H1 (cell line): ENCODE measurements at regions of chr5 and their contacts with region 1.

Region 1: DNA sequence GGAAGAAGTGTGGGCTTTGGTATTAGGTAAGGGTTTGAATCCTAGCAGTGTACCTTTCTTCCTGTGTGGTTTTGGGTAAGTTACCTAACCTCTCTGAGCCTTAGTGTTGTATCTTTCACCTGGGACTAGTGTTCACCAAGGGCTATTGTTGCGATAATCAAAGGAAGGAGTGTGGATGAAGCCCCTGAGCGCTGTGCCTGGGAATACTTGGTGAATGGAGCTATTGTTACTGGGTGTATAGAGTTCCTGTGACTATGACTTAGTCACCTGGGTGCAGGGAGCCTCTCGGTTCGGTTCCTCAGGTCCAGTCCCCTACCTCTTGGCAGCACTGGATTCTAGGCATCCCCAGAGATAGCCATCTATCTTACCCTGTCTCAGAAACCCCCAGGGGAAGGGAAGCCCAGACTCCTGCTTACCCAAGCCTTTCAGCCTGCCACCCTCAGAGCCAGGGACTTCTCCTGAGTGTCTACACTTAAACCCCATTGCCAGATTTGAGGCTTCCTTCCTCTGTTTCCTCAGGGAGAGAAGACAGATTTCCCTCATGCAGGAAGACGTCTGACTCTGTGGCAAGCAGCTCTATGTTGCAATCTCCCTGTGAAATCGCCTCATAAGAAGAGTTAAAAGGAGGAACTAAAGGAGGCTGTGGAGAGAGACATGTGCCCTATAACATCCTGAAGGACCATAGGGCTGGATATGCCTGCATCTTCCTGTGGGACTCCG is 181.0 kb upstream of the PITX1 start:
- DNase-seq: peak in 1 of 2 experiments; percentile 13
- H3K4me3 ChIP-seq: no peak overlapping the region
- H3K27ac ChIP-seq: no peak overlapping the region
- H3K4me1 ChIP-seq: peaks cover 0 to 6% (median 5%) of the 10 kb centered on the region in 4 experiments; a peak in 5 of 7 replicates
- H3K27me3 ChIP-seq: no peaks in the 10 kb centered on the region; a peak in 2 of 7 replicates
- CTCF ChIP-seq: no peak
- EP300 ChIP-seq: no peak
- POLR2A ChIP-seq: no peak
- RAD21 ChIP-seq: no peak

Region 2: DNA sequence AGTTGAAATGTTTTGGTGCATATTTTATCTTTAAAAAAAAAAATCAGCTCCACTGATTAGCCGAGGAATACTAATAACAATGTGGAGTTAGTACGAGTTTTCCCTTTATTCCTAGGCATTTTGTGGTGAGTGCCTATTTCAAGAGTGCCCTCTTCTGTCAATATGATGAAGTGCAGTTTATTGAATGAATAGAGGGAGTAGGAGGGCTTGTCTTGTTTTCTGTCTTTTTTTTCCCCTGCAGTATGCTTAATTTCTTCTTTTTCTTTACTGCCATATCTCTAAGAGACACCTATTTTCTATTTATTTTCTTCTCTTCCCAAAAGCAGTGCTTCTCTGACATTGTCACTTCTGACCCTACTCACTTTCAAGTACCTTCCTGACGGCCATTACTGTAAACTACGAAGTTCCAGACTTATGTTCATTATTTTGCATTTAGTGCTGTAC is 11.4 kb before region 1 on chr5:
- CTCF ChIA-PET with region 1: interaction called, 19 read pairs
- POLR2A ChIA-PET with region 1: no interaction called
- DNase-seq: no peak
- H3K4me3 ChIP-seq: no peak overlapping the region
- H3K27ac ChIP-seq: no peak overlapping the region
- H3K4me1 ChIP-seq: peaks cover 0 to 2% (median 0%) of the 10 kb centered on the region in 4 experiments; a peak in 2 of 7 replicates
- H3K27me3 ChIP-seq: no peaks in the 10 kb centered on the region
- CTCF ChIP-seq: peak in 2 of 3 experiments; percentile 44 to 63; a peak in 2 of 4 replicates
- EP300 ChIP-seq: no peak
- POLR2A ChIP-seq: no peak
- RAD21 ChIP-seq: peak; percentile 63 to 64

Region 3: DNA sequence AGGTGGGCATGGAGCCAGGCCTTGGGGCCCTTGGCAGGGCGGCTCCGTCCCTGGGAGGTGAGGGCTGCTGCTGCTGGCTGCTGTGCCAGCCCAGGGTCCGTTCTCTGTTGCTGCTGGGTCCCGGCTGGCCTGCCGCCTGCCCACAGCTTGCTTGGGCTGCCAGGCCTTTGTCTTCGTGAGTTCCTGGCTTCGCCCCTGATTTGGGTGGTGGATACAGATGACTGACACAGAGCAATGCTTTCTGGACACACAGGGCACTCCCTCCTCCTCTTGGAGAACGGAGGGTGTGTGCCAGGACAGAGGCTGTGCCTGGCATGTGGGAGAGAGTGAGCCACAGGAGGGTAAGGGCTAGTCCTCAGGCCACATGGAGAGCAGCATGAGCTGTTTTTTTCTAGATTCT is 17.9 kb after region 1 on chr5:
- CTCF ChIA-PET with region 1: interaction called, 17 read pairs
- POLR2A ChIA-PET with region 1: no interaction called
- DNase-seq: no peak
- H3K4me3 ChIP-seq: no peak overlapping the region
- H3K27ac ChIP-seq: no peak overlapping the region
- H3K4me1 ChIP-seq: no peaks in the 10 kb centered on the region; a peak in 1 of 7 replicates
- H3K27me3 ChIP-seq: no peaks in the 10 kb centered on the region
- CTCF ChIP-seq: no peak
- EP300 ChIP-seq: no peak
- POLR2A ChIP-seq: no peak
- RAD21 ChIP-seq: no peak